ENCODE measurements at regions of chr19 and their contacts with region 1.

Region 1: DNA sequence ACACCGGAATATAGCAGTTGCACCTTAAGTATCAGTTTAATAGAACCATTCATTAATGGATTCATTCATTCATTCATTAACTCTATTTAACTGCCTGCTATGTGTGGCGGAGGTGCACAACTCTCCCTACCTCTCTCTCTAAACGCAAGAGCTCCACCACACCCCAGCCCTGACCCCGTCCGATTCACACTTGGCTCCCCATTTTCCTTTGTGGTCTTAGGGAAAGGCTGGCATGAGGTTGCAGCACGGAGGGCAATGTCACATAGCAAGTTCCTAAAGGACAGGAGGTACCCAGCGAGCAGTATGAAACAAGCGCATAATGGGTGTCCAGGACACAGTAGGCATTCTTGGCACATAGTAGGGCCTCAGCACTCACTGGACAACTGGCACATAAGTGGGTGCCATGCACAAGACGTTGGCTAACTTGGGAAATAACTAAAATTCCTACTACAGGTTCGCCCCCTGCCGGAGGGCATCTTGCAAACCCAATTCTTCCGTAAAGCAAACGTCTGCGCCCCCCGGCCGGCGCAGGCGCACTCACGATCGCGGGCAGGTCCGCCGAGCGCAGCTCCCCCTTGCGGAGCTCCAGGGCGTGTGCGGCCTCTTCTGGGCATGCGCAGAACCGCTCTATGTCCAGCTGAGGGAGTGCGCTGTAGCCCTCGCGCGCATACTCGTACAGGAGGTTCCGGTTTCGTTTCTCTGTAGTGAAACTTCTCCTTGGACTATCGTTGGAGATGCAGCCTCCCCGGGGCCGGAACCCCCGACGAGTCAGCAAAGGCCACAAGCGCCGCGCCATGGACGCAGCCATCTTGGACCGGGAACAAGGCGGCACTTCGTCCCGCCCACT is at the start of gene SARS2:
- DNase-seq: peak; percentile 92 to 98 (median 96)
- ATAC-seq: peak; percentile 85
- H3K4me3 ChIP-seq: peak within 1 kb of the TSS; percentile 94
- H3K4me3 Mint-ChIP-seq: peak within 1 kb of the TSS; percentile 94 to 100 (median 98)
- H3K27ac ChIP-seq: peak within 1 kb of the TSS; percentile 91
- H3K27ac Mint-ChIP-seq: peak within 1 kb of the TSS; percentile 94 to 100 (median 99)
- H3K4me1 ChIP-seq: peaks cover 21 to 55% of the 10 kb centered on the region in 2 donors
- H3K4me1 Mint-ChIP-seq: peaks cover 22 to 47% (median 39%) of the 10 kb centered on the region in 7 donors
- H3K27me3 ChIP-seq: no peaks in the 10 kb centered on the region
- H3K27me3 Mint-ChIP-seq: peaks cover 0 to 2% (median 0%) of the 10 kb centered on the region in 5 donors
- total RNA-seq, gene SARS2: 17.5 to 35.6 (median 25.4) TPM

Region 2: DNA sequence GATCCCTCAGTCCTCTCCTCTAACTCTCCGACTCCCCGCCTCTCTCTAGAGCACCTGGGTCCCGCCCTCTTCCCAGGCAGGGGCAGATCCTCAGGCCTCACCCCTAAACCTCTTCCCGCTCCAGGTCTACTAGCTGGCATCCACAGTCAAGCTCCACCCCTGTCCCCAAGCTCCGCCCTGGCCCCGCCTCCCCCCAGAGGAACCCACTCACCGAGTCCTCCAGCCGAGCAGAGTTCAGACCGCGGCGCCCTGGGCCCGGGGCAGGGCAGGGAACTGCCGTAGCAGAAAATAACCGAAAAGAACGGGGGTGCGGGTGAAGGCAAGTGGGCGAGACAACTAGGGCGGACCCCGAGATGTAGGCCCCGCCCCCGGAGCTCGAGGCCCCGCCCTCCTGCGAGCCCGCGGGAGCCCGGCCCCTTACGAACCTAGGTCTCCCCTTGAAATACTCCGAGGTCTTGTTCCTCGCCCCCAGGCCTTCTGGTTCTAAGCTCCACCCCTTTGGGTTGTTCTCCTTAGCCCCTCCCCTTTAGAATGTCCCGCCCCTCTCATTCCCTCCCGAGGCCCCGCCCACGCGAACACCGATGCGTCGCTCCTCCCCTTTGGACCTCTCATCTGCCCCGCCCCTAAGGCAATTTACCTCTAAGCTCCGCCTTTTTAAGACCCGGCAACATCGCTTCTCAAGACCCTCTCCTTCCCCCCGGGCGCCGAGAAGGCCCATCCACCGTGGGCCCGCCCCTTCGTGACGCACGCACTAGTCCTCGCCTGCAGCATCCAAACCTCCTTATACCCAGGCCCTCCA is 542.4 kb before region 1 on chr19 and contains the start of gene GGN:
- CTCF ChIA-PET with region 1: no interaction called
- POLR2A ChIA-PET with region 1: no interaction called
- intact Hi-C with region 1: loop called in 1 of 2 experiments (anchors 1 kb)
- DNase-seq: peak; percentile 60 to 83 (median 72)
- ATAC-seq: peak; percentile 83
- H3K4me3 ChIP-seq: peak within 1 kb of the TSS; percentile 74
- H3K4me3 Mint-ChIP-seq: peak within 1 kb of the TSS; percentile 81 to 95 (median 91)
- H3K27ac ChIP-seq: no peak within 1 kb of the TSS
- H3K27ac Mint-ChIP-seq: peak within 1 kb of the TSS in 8 of 9 donors; percentile 43 to 95 (median 84)
- H3K4me1 ChIP-seq: peaks cover 13 to 34% of the 10 kb centered on the region in 2 donors
- H3K4me1 Mint-ChIP-seq: peaks cover 5 to 26% (median 21%) of the 10 kb centered on the region in 7 donors
- H3K27me3 ChIP-seq: no peaks in the 10 kb centered on the region
- H3K27me3 Mint-ChIP-seq: peaks cover 6 to 41% (median 30%) of the 10 kb centered on the region in 5 donors
- total RNA-seq, gene GGN: 0.29 to 0.60 (median 0.39) TPM in 3 of 5 experiments, not detected in the others

Region 3: DNA sequence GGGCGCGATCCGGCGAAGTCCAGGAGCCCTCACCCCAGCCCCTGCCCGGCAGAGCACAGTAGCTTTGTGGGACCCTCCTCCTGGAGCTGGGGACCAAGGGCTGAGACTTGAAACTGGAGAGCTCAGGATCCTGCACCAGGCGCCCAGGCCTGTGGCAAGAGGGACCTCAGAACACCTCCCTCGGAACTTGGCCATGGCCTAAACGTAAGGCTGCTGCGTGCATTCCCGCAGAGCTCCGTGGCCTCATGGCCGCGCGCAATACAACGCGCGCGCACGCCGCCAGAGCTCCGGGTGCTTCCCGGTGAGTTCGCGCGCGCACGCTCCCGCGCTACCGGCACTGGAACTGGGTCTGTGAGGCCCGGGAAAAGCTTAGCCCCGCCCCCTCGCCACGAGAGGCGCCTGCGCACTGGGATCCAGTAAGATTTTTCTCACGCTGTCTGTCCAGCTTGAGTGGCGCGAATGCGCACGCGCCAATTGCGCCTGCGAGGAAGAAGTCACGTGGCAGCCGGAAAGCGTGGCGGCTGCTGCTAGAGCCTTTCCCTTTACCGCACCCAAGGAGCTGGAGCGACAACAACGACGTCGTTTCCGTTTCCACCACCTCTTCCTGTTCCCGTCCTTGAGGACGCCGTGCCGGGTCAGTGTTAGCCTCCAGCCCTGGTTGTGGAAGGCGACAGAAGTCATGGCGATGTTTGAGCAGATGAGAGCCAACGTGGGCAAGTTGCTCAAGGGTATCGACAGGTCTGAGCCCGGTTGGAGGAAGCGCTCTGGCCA is 311.4 kb before region 1 on chr19 and contains the start of gene EIF3K:
- CTCF ChIA-PET with region 1: interaction called, 6 read pairs
- POLR2A ChIA-PET with region 1: interaction called, 3 read pairs
- intact Hi-C with region 1: loop called (anchors 1 kb)
- DNase-seq: peak; percentile 94 to 99 (median 96)
- ATAC-seq: peak; percentile 86
- H3K4me3 ChIP-seq: peak within 1 kb of the TSS; percentile 96
- H3K4me3 Mint-ChIP-seq: peak within 1 kb of the TSS; percentile 95 to 100 (median 98)
- H3K27ac ChIP-seq: peak within 1 kb of the TSS; percentile 99
- H3K27ac Mint-ChIP-seq: peak within 1 kb of the TSS; percentile 89 to 100 (median 97)
- H3K4me1 ChIP-seq: peaks cover 33 to 40% of the 10 kb centered on the region in 2 donors
- H3K4me1 Mint-ChIP-seq: peaks cover 38 to 61% (median 44%) of the 10 kb centered on the region in 7 donors
- H3K27me3 ChIP-seq: no peaks in the 10 kb centered on the region
- H3K27me3 Mint-ChIP-seq: no peaks in the 10 kb centered on the region
- total RNA-seq, gene EIF3K: 294 to 405 (median 337) TPM

Region 4: DNA sequence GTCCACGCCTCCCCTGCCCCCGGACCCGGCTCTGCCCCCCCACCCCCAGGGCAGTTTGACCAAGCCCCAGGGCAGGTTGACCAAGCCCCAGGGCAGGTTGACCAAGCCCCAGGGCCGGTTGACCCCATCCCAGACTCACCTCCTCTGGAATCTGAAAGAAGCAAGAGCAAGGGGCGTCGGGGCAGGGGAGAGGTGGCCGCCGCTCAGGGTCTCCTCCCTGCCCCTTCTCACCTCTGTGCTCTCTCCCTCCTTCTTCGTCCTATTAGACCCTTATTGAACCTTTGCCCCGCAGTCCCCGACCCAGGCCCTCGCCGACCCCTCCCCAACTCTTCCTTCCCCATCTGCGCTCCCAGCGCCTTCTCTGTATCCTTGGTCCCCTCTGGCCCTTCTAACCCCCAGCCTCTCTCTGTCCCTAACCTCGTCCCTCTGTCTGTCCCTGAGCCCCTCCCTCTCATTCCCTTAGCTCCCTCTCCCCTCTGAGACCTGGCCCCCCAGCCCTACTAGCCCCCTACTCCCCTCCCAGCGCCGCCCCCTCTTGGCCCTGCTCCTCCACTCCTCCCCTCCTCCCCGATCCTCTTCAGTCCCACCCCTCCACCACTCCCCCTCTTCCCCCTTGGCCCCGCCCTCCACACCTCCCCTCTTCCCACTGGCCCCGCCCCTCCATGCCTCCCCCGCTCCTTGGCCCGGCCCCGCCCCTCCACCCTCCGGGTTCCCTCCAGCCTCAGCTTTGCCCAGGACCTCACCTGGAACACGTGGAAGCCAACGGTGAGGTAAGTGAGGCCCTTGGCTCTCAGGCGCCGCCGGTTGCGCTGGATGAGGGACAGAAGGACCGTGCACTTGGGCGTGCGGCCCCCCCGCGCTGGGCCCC is 193.5 kb before region 1 on chr19:
- CTCF ChIA-PET with region 1: interaction called, 6 read pairs
- POLR2A ChIA-PET with region 1: interaction called, 17 read pairs
- intact Hi-C with region 1: loop called in 1 of 2 experiments (anchors 1 kb)
- DNase-seq: peak in 6 of 9 donors; percentile 31 to 69 (median 41)
- ATAC-seq: peak; percentile 63
- H3K4me3 ChIP-seq: peak overlapping the region; percentile 24
- H3K4me3 Mint-ChIP-seq: peak overlapping the region; percentile 35 to 83 (median 62)
- H3K27ac ChIP-seq: no peak overlapping the region
- H3K27ac Mint-ChIP-seq: peak overlapping the region in 5 of 9 donors; percentile 13 to 76 (median 36)
- H3K4me1 ChIP-seq: peaks cover 15 to 27% of the 10 kb centered on the region in 2 donors
- H3K4me1 Mint-ChIP-seq: peaks cover 7 to 47% (median 29%) of the 10 kb centered on the region in 7 donors
- H3K27me3 ChIP-seq: no peaks in the 10 kb centered on the region
- H3K27me3 Mint-ChIP-seq: peaks cover 0 to 10% (median 0%) of the 10 kb centered on the region in 5 donors

Region 5: DNA sequence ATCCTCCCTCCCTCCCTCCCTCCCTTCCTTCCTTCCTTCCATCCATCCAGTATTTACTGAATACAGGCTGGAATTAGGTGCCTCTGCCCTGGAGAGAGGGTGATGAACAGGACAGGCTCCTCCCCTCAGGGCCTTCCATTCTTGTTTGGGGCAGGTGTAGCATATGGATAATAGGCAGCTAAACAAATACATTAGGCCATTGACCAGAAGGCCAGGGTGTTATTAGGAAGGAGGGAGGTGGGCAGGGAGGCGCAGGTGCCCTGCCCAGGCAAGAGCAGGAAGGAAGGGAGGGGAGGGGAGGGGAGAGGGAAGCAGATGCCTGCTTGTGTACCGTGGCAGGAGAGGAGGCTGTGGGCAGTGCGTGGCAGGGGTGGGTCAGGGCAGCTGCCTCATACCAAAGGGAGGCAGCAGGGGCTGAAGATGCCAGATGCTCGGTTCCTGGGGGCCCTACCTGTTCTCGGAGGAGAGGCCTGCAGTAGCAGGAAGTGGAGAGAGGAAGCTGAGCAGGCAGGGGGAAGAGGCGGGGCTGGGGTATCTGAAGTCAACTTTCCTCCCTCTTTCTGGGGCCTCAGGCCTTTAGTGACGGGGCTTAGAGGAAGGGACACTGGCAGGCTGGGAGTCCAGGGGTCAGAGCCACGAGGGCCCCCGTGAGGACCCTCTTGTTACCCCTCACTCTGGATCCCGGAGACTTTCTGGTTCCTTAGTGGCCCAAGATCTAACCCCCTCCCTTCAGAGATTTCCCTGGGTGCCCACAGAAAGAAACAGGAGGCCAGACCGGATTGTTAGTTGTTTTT is 52.2 kb before region 1 on chr19 and contains the start of gene RINL:
- CTCF ChIA-PET with region 1: interaction called, 3 read pairs
- POLR2A ChIA-PET with region 1: interaction called, 19 read pairs
- intact Hi-C with region 1: loop called in 1 of 2 experiments (anchors 2 kb)
- DNase-seq: peak; percentile 41 to 78 (median 74)
- ATAC-seq: peak; percentile 94
- H3K4me3 ChIP-seq: peak within 1 kb of the TSS; percentile 60
- H3K4me3 Mint-ChIP-seq: peak within 1 kb of the TSS; percentile 58 to 98 (median 88)
- H3K27ac ChIP-seq: peak within 1 kb of the TSS; percentile 93
- H3K27ac Mint-ChIP-seq: peak within 1 kb of the TSS; percentile 95 to 99 (median 97)
- H3K4me1 ChIP-seq: peaks cover 22 to 30% of the 10 kb centered on the region in 2 donors
- H3K4me1 Mint-ChIP-seq: peaks cover 15 to 47% (median 30%) of the 10 kb centered on the region in 7 donors
- H3K27me3 ChIP-seq: no peaks in the 10 kb centered on the region
- H3K27me3 Mint-ChIP-seq: no peaks in the 10 kb centered on the region
- total RNA-seq, gene RINL: 32.8 to 75.9 (median 64.0) TPM

Region 6: DNA sequence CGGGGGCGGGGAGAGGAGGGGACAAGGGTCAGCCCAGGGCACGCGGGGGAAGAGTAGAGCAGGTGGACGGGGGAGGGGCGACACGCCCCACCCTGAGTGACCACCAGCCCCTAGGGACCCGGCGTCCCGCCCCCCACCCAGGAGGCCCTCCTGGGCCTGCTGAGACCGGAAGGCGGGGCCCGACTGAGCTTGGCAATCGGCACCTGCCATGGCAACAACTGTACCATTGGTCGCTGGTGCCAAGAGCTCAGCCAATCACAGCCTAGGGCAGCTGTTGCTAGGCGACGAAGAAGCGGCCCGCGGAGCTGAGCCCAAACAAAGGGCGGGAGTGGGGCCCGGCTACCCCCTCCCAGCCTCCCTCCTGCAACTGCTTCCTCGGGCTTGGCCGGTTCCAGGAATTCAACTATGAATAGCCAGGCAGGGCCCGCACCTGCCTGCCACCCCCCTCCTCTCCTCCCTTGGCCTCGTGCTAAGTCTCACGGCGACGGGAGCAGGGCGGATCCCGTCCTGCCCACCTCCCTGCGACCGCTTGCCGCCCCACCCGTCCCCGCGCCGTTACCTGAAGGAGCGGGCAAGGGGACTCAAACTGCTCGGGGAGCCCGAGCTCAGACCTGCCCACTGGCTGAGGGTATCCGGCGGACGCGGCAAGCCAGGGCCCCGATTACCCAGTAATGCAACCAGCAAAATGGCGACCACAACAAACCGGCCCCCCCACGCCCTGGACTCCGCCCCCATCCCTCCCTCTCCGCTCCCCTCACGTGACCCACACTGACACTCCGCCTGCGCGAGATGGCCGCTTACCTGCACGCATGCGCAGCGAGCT is 903.5 kb after region 1 on chr19 and contains the start of gene DYRK1B:
- CTCF ChIA-PET with region 1: no interaction called
- POLR2A ChIA-PET with region 1: no interaction called
- intact Hi-C with region 1: loop called in 1 of 2 experiments (anchors 10 kb)
- DNase-seq: peak; percentile 90 to 99 (median 98)
- ATAC-seq: peak; percentile 92
- H3K4me3 ChIP-seq: peak within 1 kb of the TSS; percentile 100
- H3K4me3 Mint-ChIP-seq: peak within 1 kb of the TSS; percentile 60 to 88 (median 81)
- H3K27ac ChIP-seq: peak within 1 kb of the TSS; percentile 96
- H3K27ac Mint-ChIP-seq: peak within 1 kb of the TSS; percentile 85 to 96 (median 92)
- H3K4me1 ChIP-seq: peaks cover 17 to 23% of the 10 kb centered on the region in 2 donors
- H3K4me1 Mint-ChIP-seq: peaks cover 19 to 37% (median 27%) of the 10 kb centered on the region in 7 donors
- H3K27me3 ChIP-seq: no peaks in the 10 kb centered on the region
- H3K27me3 Mint-ChIP-seq: no peaks in the 10 kb centered on the region
- total RNA-seq, gene DYRK1B: 12.3 to 38.9 (median 23.5) TPM

Measured in naive thymus-derived CD4-positive, alpha-beta T cell (primary cell).